ENCODE measurements at regions of chrX and their contacts with region 1.

Region 1: DNA sequence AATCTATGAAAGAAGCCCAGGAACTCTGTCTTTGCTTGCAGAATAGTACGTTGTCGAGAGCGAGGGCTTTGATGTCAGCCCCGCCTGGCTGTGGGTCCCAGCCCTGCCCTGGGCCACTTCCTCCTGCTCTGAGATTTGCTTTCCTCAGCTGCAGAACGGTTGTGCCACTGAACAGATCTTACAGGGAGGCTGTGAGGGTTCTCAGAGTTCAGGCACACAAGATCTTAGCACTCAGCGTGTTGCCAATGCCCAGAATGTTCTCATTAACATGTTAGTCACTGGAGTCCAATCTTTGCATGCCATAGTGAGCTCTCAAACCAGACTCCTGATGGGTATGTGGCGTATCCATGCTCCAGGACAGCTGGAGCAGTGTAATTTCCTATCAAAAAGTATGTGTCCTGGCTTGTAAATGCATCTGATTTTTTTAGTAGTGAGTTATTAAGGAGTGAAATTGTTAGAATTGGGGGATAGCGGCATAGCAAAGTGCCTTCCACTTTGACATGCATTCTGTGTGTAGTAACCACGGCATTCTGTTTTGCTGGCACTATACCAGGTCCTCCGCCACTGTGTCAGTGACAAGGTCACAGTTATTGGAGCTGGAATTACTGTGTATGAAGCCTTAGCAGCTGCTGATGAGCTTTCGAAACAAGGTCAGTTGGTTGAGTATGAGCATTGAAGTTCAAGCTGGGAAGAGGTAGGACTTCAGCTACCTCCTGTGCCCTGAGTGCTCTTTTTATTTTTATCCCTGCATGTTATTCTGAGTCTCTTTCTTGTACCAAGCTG is 31.6 kb downstream of the TKTL1 start:
- DNase-seq: no peak
- H3K4me3 ChIP-seq: no peak overlapping the region
- H3K4me1 ChIP-seq: peaks cover 36% of the 10 kb centered on the region
- H3K27me3 ChIP-seq: no peaks in the 10 kb centered on the region

Region 2: DNA sequence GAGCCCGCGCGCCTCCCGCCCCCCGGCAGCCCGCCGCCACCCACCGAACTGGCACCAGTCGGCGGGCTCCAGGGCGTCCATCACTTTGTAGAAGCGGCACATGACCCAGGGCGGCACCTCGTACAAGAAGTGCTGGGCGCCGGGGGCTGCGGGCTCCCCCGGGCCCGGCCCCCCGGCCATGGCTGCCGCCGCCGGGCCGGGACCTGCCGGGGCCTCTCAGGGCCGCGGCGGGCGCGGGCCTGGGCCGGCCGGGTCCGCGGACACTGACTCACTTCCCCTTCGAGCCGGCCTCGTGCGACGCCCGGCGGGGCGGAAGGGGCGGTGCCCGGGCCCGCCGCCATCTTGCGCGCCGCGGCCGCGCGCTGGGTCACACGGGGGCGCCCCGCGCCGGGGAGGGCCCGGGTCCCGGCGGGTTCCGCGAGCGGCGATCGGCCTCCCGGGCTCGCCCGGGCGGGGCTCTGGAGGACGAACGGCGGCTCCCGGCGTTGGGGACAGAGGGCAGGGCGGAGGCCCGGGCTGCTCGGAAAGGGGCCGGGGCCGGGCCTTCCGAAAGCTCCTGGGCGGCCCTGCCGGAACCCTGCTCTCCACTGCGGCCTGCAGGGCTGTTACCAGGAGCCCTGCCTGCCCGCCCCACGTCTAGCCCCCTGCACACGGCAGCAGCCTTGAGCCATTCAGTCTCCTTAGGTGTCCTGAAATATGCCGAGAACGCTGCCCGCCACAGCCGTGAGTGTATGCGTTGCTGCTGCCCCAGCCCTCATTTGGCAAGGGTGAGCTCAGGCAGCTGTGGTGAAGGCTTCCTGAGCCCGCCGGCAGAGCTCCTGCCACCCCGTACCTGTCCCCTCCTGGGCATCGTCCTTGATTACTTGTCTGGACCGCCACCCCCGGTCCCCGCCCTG is 307.3 kb before region 1 on chrX and contains the start of gene IRAK1:
- in situ Hi-C with region 1: loop called (anchors 25 kb)
- DNase-seq: peak; percentile 33 to 70
- H3K4me3 ChIP-seq: peak within 1 kb of the TSS; percentile 53
- H3K4me1 ChIP-seq: peaks cover 48% of the 10 kb centered on the region
- H3K27me3 ChIP-seq: no peaks in the 10 kb centered on the region

Measured in HAP-1 (cell line).